Naive thymus-derived CD4-positive, alpha-beta T cell (primary cell): ENCODE measurements at regions of chr1 and their contacts with region 1.

Region 1: DNA sequence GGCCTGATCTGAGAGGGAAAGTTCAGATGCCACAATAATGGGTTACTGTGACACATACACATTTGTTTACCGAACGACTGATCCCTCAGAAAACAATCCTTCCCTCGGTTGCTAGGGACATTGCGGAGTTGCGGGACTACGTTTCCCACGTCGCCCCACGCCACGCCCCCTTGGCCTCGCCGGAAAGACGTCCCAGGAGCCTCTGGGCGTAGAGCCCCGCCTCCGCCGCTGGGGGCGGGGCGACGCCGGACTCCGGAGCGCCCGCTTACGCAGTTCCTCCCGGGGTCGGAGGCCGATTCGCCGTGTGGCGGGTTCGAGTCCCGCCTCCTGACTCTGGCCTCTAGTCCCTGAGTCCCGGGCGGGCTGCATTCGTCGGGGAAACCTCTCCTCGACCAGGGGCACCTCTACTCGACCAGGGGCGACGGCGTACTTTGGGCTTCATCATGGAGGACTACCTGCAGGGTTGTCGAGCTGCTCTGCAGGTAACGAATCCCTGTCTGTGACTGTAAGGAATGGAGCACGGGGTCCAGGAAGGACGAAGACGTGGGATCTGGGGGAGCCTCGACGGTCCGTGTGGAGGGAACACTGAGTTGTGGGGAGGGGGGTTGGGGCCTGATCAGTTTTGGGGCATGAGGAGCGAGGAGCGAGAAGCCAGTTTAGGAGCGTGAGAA is at the start of gene PRUNE1:
- DNase-seq: peak; percentile 87 to 98 (median 92)
- ATAC-seq: peak; percentile 96
- H3K4me3 ChIP-seq: peak within 1 kb of the TSS; percentile 88
- H3K4me3 Mint-ChIP-seq: peak within 1 kb of the TSS; percentile 91 to 100 (median 97)
- H3K27ac ChIP-seq: peak within 1 kb of the TSS; percentile 96
- H3K27ac Mint-ChIP-seq: peak within 1 kb of the TSS; percentile 92 to 99 (median 97)
- H3K4me1 ChIP-seq: peaks cover 32 to 45% of the 10 kb centered on the region in 2 donors
- H3K4me1 Mint-ChIP-seq: peaks cover 46 to 84% (median 70%) of the 10 kb centered on the region in 7 donors
- H3K27me3 ChIP-seq: no peaks in the 10 kb centered on the region
- H3K27me3 Mint-ChIP-seq: no peaks in the 10 kb centered on the region
- total RNA-seq, gene PRUNE1: 13.3 to 41.8 (median 17.2) TPM

Region 2: DNA sequence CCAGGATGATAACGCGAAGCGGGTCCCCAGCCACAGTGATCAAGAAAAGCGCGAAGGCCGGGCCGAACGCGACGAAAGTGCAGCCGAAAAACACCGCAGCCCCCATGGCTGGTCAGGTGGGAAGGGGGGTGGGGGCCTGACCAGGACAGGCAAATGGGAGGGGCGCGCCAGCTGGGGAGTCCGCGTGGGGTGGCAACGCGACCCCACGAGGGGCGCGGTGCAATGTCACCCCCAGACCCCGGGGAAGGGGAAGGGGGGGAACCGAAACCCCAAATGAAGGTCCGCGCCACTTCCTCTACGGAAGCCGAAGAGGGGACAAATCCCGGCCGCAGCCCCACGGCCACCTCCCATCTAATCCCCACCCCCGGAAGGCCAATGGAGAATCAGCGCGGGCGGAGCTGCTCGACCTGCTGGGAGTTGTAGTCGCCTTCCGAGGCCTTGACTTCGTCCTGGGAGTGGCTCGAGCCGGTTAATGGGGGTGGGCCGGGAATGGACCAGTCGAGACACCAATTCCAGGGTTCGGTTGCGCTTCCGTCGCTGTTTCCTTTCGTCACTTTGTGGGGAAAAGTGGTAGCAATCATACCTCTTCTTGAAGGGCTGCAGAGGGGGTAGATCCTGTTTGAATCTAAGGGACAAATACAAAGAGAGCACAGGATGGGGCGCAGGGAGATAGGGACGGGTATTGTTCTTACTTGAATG is 739.5 kb before region 1 on chr1 and contains the start of gene APH1A:
- CTCF ChIA-PET with region 1: no interaction called
- POLR2A ChIA-PET with region 1: no interaction called
- intact Hi-C with region 1: loop called in 1 of 2 experiments (anchors 5 kb)
- DNase-seq: peak; percentile 69 to 92 (median 89)
- ATAC-seq: peak; percentile 97
- H3K4me3 ChIP-seq: peak within 1 kb of the TSS; percentile 87
- H3K4me3 Mint-ChIP-seq: peak within 1 kb of the TSS; percentile 94 to 99 (median 96)
- H3K27ac ChIP-seq: peak within 1 kb of the TSS; percentile 97
- H3K27ac Mint-ChIP-seq: peak within 1 kb of the TSS; percentile 88 to 99 (median 94)
- H3K4me1 ChIP-seq: peaks cover 13 to 20% of the 10 kb centered on the region in 2 donors
- H3K4me1 Mint-ChIP-seq: peaks cover 25 to 39% (median 30%) of the 10 kb centered on the region in 7 donors
- H3K27me3 ChIP-seq: no peaks in the 10 kb centered on the region
- H3K27me3 Mint-ChIP-seq: no peaks in the 10 kb centered on the region
- total RNA-seq, gene APH1A: 112 to 143 (median 127) TPM

Region 3: DNA sequence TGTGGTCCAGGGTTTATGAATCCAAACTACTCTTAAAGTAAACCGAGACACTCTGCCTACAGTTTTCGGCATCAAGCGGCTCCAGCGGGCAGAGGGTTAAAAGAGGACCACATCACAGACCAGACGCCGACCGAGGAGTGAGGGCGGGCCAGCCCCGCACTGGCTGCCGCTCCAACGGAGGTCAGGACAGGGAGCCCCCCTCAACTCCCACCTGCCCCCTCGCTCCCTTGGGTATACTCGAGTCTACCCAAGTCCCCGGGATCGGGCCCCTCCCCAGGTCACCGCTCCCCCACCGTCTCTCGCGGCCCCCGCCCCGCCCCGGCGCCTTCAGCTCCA is 132.2 kb before region 1 on chr1:
- CTCF ChIA-PET with region 1: no interaction called
- POLR2A ChIA-PET with region 1: no interaction called
- intact Hi-C with region 1: loop called in 1 of 2 experiments (anchors 1 kb)
- DNase-seq: no peak
- ATAC-seq: peak; percentile 50
- H3K4me3 ChIP-seq: peak overlapping the region; percentile 68
- H3K4me3 Mint-ChIP-seq: peak overlapping the region; percentile 87 to 96 (median 95)
- H3K27ac ChIP-seq: peak overlapping the region; percentile 83
- H3K27ac Mint-ChIP-seq: peak overlapping the region; percentile 89 to 97 (median 94)
- H3K4me1 ChIP-seq: peaks cover 0 to 19% of the 10 kb centered on the region in 2 donors
- H3K4me1 Mint-ChIP-seq: peaks cover 13 to 45% (median 37%) of the 10 kb centered on the region in 7 donors
- H3K27me3 ChIP-seq: no peaks in the 10 kb centered on the region
- H3K27me3 Mint-ChIP-seq: no peaks in the 10 kb centered on the region

Region 4: GRCh38 chr1:150979092-150980056 is 29.0 kb before region 1 on chr1:
- CTCF ChIA-PET with region 1: interaction called, 30 read pairs
- POLR2A ChIA-PET with region 1: interaction called, 31 read pairs
- intact Hi-C with region 1: loop called (anchors 1 kb)
- DNase-seq: peak; percentile 68 to 93 (median 84)
- ATAC-seq: peak; percentile 81
- H3K4me3 ChIP-seq: peak overlapping the region; percentile 39
- H3K4me3 Mint-ChIP-seq: peak overlapping the region in 9 of 10 donors; percentile 39 to 73 (median 61)
- H3K27ac ChIP-seq: peak overlapping the region; percentile 67
- H3K27ac Mint-ChIP-seq: peak overlapping the region; percentile 9 to 83 (median 62)
- H3K4me1 ChIP-seq: peaks cover 24 to 34% of the 10 kb centered on the region in 2 donors
- H3K4me1 Mint-ChIP-seq: peaks cover 14 to 44% (median 37%) of the 10 kb centered on the region in 7 donors
- H3K27me3 ChIP-seq: no peaks in the 10 kb centered on the region
- H3K27me3 Mint-ChIP-seq: no peaks in the 10 kb centered on the region

Region 5: DNA sequence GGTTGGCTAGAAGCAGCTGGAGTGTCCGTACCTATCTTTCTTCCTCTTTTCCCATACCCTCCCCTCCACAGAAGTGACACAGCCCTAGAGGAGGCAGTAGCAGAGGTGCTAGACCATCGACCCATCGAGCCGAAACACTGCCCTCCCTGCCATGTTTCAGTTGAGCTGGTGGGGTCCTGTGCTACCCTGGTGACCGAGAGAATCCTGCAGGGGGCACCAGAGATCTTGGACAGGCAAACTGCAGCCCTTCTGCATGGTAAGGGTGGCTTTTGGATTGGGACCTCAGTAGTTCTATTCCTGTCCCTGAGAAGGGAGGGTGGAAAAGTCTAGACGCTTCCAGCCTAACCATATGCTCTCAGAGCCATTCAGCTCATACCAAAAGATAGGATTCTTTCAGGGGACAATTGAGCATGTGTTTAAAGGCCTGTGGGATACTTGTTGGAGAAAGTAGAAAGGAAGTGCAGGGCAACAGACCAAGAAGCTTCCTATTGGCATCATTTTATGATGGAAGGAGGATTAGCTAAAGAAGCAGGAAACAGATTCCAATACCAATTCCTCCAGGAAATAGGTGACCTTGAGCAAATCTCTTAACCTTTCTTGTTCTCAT is 16.3 kb after region 1 on chr1:
- CTCF ChIA-PET with region 1: interaction called, 6 read pairs
- POLR2A ChIA-PET with region 1: interaction called, 4 read pairs
- intact Hi-C with region 1: loop called in 1 of 2 experiments (anchors 1 kb)
- DNase-seq: peak; percentile 72 to 91 (median 83)
- ATAC-seq: peak; percentile 100
- H3K4me3 ChIP-seq: no peak overlapping the region
- H3K4me3 Mint-ChIP-seq: peak overlapping the region; percentile 16 to 73 (median 61)
- H3K27ac ChIP-seq: no peak overlapping the region
- H3K27ac Mint-ChIP-seq: peak overlapping the region; percentile 37 to 93 (median 74)
- H3K4me1 ChIP-seq: no peaks in the 10 kb centered on the region
- H3K4me1 Mint-ChIP-seq: peaks cover 4 to 22% (median 6%) of the 10 kb centered on the region in 7 donors
- H3K27me3 ChIP-seq: no peaks in the 10 kb centered on the region
- H3K27me3 Mint-ChIP-seq: no peaks in the 10 kb centered on the region

Region 6: DNA sequence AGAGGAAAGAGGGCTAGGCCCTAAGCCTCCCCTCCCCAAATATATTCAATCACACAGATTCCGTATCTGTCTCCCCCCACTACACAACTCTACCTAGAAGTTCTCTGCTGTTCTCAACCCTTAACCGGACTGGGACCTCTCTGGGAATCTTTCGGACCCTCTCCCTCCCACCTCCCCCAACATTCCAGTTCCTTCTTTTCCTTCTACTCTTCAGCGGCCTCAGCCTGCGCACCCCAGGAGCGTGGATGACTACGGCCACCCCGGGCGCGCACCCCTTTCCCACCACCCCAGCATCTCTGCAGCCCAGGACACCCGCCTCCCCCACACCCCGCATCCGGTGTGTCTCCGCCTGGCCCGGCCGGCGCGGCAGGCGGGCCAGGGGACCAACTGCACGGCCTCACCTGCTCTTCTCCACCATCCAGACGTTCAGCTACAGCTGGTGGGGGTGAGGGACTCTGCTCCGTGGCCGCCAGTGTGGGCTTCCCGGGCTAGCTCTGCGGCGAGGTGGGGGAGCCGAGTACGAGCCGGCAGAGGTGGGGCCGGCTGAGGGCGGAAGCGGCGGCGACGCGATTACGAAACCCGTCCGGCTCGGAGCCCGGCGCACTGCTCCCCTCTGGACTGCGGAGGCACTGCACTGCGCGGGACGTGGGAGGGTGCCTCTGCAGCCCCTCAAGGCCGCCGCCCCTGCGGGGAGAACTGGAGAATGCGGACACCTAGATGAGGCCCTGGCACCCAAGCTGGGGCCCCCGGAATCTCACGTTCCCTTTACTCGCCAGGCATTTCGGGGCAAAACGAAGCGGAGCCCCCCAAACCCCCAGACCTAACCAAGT is 51.0 kb after region 1 on chr1 and contains the start of gene CDC42SE1:
- CTCF ChIA-PET with region 1: interaction called, 12 read pairs
- POLR2A ChIA-PET with region 1: interaction called, 40 read pairs
- intact Hi-C with region 1: loop called (anchors 1 kb)
- DNase-seq: peak; percentile 76 to 85 (median 82)
- ATAC-seq: peak; percentile 84
- H3K4me3 ChIP-seq: peak within 1 kb of the TSS; percentile 82
- H3K4me3 Mint-ChIP-seq: peak within 1 kb of the TSS; percentile 95 to 100 (median 99)
- H3K27ac ChIP-seq: peak within 1 kb of the TSS; percentile 99
- H3K27ac Mint-ChIP-seq: peak within 1 kb of the TSS; percentile 93 to 99 (median 95)
- H3K4me1 ChIP-seq: peaks cover 11 to 26% of the 10 kb centered on the region in 2 donors
- H3K4me1 Mint-ChIP-seq: peaks cover 35 to 55% (median 41%) of the 10 kb centered on the region in 7 donors
- H3K27me3 ChIP-seq: no peaks in the 10 kb centered on the region
- H3K27me3 Mint-ChIP-seq: no peaks in the 10 kb centered on the region
- total RNA-seq, gene CDC42SE1: 362 to 516 (median 425) TPM

Region 7: GRCh38 chr1:151165738-151166505 is 157.6 kb after region 1 on chr1 and contains the starts of genes LYSMD1 and SCNM1:
- CTCF ChIA-PET with region 1: no interaction called
- POLR2A ChIA-PET with region 1: interaction called, 10 read pairs
- intact Hi-C with region 1: loop called (anchors 1 kb)
- DNase-seq: peak; percentile 78 to 98 (median 97)
- ATAC-seq: peak; percentile 98
- H3K4me3 ChIP-seq: peak within 1 kb of the TSS; percentile 97
- H3K4me3 Mint-ChIP-seq: peak within 1 kb of the TSS; percentile 87 to 99 (median 95)
- H3K27ac ChIP-seq: peak within 1 kb of the TSS; percentile 71
- H3K27ac Mint-ChIP-seq: peak within 1 kb of the TSS; percentile 90 to 99 (median 97)
- H3K4me1 ChIP-seq: peaks cover 18 to 19% of the 10 kb centered on the region in 2 donors
- H3K4me1 Mint-ChIP-seq: peaks cover 30 to 70% (median 52%) of the 10 kb centered on the region in 7 donors
- H3K27me3 ChIP-seq: no peaks in the 10 kb centered on the region
- H3K27me3 Mint-ChIP-seq: peaks cover 0 to 3% (median 0%) of the 10 kb centered on the region in 5 donors
- total RNA-seq, gene LYSMD1: 1.4 to 3.3 (median 2.3) TPM
- total RNA-seq, gene SCNM1: 37.1 to 73.1 (median 57.1) TPM